ENCODE measurements at regions of chr2 and their contacts with region 1.

Region 1: DNA sequence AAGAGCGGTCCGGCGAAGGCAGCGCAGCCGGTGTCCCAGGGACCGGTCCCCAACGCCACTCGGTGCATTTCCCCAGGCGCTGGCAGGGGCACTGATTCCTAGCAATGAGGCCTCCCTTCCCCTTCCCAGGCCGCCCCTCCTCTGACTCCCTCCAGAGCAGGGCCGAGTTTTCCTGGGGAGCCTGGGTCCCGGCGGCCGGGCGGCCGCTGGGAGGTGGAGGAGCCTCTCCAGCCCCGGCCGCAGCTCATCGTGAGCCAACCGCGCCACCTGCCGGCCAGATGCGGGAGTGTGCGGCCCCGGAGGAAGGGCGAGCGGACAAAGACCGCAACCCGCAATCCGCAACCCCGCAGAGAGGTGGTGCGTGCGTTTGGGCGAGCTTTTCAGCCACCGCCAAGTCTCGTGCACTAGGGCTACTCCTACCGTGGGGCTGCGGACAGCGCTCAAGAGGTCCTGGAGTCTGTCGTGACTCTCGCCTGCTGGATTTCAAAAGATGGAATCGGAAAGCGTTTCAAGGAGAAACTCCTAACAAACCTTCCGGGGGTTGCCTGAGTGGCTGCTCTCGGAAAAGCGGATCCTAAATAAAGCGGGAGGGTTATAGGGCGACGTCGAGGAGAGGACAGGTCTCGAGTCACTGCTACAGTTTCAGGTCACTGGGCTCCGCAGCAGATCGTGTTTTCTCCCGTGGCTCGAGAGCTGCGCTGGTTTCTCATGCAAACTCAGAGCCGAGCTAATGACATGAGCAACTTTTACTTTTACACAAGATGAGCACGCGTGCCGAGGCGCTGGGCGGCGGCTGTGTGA is 1.5 kb upstream of the EPHA4 start:
- DNase-seq: peak; percentile 82
- H3K4me3 ChIP-seq: peak overlapping the region; percentile 45 to 68 (median 67)
- H3K27ac ChIP-seq: peak overlapping the region; percentile 14
- H3K4me1 ChIP-seq: peaks cover 10% of the 10 kb centered on the region
- H3K27me3 ChIP-seq: peaks cover 3 to 8% of the 10 kb centered on the region in 2 experiments
- CTCF ChIP-seq: peak; percentile 96 to 97
- POLR2A ChIP-seq: no peak

Region 2: GRCh38 chr2:220687231-220687843 is 886.3 kb before region 1 on chr2:
- CTCF ChIA-PET with region 1: interaction called, 29 read pairs
- POLR2A ChIA-PET with region 1: no interaction called
- dilution Hi-C with region 1: no loop called
- intact Hi-C with region 1: loop called (anchors 1 kb)
- DNase-seq: peak; percentile 52
- H3K4me3 ChIP-seq: no peak overlapping the region
- H3K27ac ChIP-seq: no peak overlapping the region
- H3K4me1 ChIP-seq: no peaks in the 10 kb centered on the region
- H3K27me3 ChIP-seq: no peaks in the 10 kb centered on the region
- CTCF ChIP-seq: peak; percentile 71 to 73
- POLR2A ChIP-seq: no peak

Region 3: DNA sequence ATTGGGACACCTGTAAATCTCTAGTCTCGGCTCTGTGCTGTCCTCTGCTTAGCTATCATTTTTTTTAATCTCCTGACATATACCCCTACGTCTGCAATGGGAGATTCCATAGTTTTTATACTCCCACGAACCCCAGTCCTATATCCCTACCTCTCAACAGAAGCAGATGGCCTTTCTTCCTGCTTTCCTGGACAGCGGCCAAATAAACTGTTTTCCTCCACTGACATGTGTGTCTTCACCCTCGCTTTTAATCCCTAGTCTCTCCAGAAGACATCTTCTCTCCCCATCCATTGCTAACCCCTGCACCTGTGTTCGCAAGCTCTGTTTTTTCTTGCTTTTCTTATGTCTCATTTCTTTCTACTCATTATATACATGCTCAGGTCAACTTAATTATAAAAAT is 397.0 kb before region 1 on chr2:
- CTCF ChIA-PET with region 1: no interaction called
- POLR2A ChIA-PET with region 1: no interaction called
- dilution Hi-C with region 1: no loop called
- intact Hi-C with region 1: loop called (anchors 10 kb)
- DNase-seq: no peak
- H3K4me3 ChIP-seq: no peak overlapping the region
- H3K27ac ChIP-seq: no peak overlapping the region
- H3K4me1 ChIP-seq: no peaks in the 10 kb centered on the region
- H3K27me3 ChIP-seq: no peaks in the 10 kb centered on the region
- CTCF ChIP-seq: no peak
- POLR2A ChIP-seq: no peak

Region 4: DNA sequence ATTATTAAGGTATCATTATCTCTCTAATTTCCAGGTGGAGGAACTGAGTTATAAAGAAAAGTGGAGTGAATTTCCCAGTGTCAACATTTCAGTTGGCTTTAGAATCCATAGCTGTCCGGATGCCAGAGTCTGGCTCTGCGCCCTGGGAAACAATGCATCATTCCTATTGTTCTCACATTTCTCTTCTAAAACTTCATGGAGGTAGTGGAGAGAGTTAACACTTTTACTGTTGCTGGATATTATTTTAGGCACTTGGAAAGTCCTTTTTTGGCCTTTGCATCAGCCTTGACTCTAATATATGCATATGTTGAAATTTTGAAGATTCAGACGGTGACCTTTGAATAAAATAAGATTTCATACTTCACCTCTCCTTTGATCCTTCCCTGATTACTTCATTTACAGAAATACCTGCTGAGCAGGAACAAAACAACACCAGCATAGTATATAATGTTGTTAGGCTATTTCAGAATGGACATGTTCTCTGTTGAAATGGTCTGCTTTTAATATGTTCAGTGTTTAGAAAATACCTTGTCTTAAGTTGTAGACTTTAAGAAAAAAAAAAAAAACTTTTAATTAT is 150.3 kb before region 1 on chr2:
- CTCF ChIA-PET with region 1: interaction called, 5 read pairs
- POLR2A ChIA-PET with region 1: no interaction called
- dilution Hi-C with region 1: no loop called
- intact Hi-C with region 1: loop called (anchors 1 kb)
- DNase-seq: peak; percentile 97
- H3K4me3 ChIP-seq: peak overlapping the region in 1 of 3 experiments; percentile 1
- H3K27ac ChIP-seq: peak overlapping the region; percentile 82
- H3K4me1 ChIP-seq: peaks cover 35% of the 10 kb centered on the region
- H3K27me3 ChIP-seq: no peaks in the 10 kb centered on the region
- CTCF ChIP-seq: no peak
- POLR2A ChIP-seq: no peak

Region 5: DNA sequence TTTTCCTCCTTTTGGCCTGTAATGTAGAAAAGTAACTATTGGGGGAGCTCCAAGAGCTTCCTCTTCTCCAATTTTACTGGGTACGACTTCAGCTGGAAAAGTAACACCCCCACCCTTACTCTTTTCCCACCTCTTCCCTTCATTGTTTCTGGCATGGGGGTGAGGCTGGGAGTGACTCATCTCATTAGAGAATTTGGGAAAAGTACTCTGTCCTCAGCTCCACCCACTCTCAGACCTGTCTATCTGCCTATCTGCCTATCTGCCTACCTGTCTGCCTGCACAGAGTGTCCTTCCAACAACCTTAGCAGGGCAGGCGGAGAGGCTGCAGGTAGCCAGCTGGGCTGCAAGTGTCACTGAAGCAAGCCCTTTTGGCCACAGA is 95.2 kb before region 1 on chr2:
- CTCF ChIA-PET with region 1: no interaction called
- POLR2A ChIA-PET with region 1: no interaction called
- dilution Hi-C with region 1: no loop called
- intact Hi-C with region 1: loop called (anchors 1 kb)
- DNase-seq: peak; percentile 32
- H3K4me3 ChIP-seq: no peak overlapping the region
- H3K27ac ChIP-seq: no peak overlapping the region
- H3K4me1 ChIP-seq: peaks cover 13% of the 10 kb centered on the region
- H3K27me3 ChIP-seq: no peaks in the 10 kb centered on the region
- CTCF ChIP-seq: no peak
- POLR2A ChIP-seq: no peak

Region 6: GRCh38 chr2:221529943-221530652 is 43.5 kb before region 1 on chr2:
- CTCF ChIA-PET with region 1: interaction called, 11 read pairs
- POLR2A ChIA-PET with region 1: no interaction called
- dilution Hi-C with region 1: no loop called
- intact Hi-C with region 1: loop called (anchors 1 kb)
- DNase-seq: peak; percentile 89
- H3K4me3 ChIP-seq: peak overlapping the region in 1 of 3 experiments; percentile 37
- H3K27ac ChIP-seq: peak overlapping the region; percentile 88
- H3K4me1 ChIP-seq: peaks cover 41% of the 10 kb centered on the region
- H3K27me3 ChIP-seq: no peaks in the 10 kb centered on the region
- CTCF ChIP-seq: no peak
- POLR2A ChIP-seq: no peak

Region 7: GRCh38 chr2:221969087-221969829 is 395.6 kb after region 1 on chr2:
- CTCF ChIA-PET with region 1: interaction called, 23 read pairs
- POLR2A ChIA-PET with region 1: no interaction called
- dilution Hi-C with region 1: no loop called
- intact Hi-C with region 1: loop called (anchors 1 kb)
- DNase-seq: peak; percentile 52
- H3K4me3 ChIP-seq: no peak overlapping the region
- H3K27ac ChIP-seq: no peak overlapping the region
- H3K4me1 ChIP-seq: no peaks in the 10 kb centered on the region
- H3K27me3 ChIP-seq: no peaks in the 10 kb centered on the region
- CTCF ChIP-seq: peak; percentile 44 to 58
- POLR2A ChIP-seq: no peak

Measured in endothelial cell of umbilical vein (primary cell).